GM18951 (cell line): ENCODE measurements at regions of chr3 and their contacts with region 1.

Region 1: DNA sequence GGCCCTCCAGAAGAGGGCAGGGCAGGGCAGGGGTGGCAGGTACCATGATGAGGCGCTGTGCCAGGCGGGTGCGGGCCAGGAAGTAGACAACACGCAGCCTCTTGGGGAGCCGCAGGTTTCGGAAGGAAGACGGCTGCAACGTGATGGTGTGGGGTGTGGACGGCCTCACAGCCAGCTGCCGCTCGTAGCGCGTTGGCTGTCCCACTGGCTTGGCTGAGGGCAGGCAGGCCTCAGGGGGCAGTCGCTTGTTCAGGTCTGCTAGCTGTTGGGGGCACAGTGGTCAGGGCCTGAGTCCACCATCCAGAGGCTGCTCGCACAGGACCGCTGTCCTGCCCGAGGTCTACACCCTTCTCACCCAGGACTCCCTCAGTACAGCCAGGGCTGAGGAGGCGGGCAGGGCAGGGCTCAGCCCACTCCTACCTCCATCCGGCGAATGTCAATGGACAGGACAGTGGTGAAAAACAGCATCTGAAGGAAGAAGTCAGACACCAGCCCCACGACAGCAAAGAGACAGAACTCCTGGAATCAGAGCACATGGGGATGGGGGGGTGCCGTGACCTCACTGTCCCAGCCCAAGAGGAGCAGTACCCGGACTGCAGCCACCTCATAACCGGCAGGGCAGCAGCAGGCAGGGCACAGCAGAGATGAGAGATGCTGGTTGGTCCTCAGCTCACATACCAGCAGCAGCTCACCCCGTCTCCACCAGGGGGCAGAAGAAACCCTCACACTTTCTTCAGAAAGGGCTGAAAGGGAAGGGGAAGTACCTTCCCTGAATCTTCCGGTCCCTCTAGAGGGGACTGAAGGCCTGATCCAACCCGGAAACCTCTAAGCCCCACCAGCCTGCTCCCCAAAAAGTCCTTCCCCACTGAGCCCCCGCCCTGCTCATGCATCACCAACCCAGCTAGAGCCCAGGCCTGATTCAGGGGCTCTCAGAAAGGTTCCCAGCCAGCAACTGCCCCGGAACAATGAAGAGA is 40.0 kb downstream of the PTPN23 start:
- POLR2A ChIP-seq: no peak

Region 2: GRCh38 chr3:47475570-47476329 is 55.0 kb after region 1 on chr3 and contains the start of gene SCAP:
- in situ Hi-C with region 1: loop called (anchors 10 kb)
- POLR2A ChIP-seq: peak; percentile 74

Region 3: DNA sequence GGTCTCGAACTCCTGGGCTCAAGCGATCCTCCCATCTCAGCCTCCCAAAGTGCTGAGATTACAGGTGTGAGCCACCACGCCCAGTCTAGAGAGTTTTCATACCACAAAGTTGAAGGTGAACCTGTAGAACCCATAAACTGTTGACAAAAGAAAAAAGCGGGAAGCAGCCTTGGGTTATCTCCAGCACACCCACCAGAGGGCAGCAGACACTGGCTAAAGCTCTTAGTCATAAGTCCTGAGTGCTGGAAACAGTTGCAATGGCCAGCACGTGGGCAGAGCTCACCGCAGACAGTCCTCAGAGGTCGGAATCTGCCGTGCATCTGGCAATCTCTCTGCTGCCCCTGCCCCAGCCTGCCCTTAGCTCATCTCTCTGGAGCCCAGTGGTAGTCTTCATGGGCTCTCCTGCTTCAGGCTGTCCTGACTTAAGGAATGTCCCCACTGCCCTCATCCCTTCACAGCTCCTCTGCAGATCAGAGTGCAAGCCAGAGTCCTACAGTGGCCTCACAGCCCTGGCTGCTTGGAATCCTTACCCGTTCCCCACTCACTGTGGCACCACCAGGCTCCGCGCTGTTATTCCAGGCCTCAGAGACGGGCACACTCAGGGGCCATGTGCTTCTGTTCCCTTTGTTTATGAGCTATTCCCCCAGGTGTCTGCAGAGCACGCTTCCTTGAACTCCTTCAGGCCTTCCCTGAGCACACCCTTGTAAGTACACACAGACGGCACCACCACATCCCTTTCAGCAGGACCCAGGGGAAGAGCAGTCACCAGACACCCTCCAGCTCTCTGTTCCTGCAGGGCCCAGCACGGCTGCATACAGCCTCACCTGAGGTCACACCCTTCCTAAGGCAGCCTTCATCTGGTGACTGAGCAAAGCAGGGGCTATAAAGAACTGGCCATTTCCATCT is 101.5 kb after region 1 on chr3:
- in situ Hi-C with region 1: no loop called
- POLR2A ChIP-seq: no peak

Region 4: GRCh38 chr3:48429317-48429959 is 1008.6 kb after region 1 on chr3:
- in situ Hi-C with region 1: no loop called
- POLR2A ChIP-seq: peak; percentile 46